CD14-positive monocyte (primary cell): ENCODE measurements at regions of chr6 and their contacts with region 1.

Region 1: GRCh38 chr6:159654483-159655098 is 38.5 kb downstream of the SOD2 start:
- DNase-seq: peak in 2 of 3 donors; percentile 52 to 65
- H3K4me3 ChIP-seq: no peak overlapping the region
- H3K4me3 Mint-ChIP-seq: no peak overlapping the region
- H3K27ac ChIP-seq: no peak overlapping the region
- H3K27ac Mint-ChIP-seq: no peak overlapping the region
- H3K4me1 ChIP-seq: no peaks in the 10 kb centered on the region
- H3K4me1 Mint-ChIP-seq: no peaks in the 10 kb centered on the region
- H3K27me3 ChIP-seq: no peaks in the 10 kb centered on the region
- H3K27me3 Mint-ChIP-seq: peaks cover 0 to 3% (median 2%) of the 10 kb centered on the region in 3 donors
- CTCF ChIP-seq: peak; percentile 83

Region 2: DNA sequence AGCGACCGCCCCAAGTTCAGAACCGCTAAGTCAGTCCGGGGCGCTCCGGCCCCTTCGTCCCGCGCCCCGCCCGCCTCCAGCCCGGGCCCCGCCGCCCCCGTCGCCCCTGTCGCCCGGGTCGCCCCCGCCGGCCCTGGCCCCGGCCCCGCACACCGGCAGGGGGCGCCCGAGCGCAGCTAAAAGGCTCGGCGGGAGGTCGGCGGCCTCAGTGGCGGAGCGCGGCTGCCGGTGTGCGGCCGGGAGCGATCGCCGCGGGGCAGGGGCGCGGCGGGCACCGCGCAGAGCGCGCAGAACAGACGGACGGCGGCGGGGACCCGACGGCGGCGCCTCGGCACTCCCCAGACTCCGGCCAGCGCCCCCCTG is 485.4 kb before region 1 on chr6 and contains the start of gene FNDC1:
- intact Hi-C with region 1: loop called in 1 of 2 experiments (anchors 2 kb)
- DNase-seq: peak in 2 of 3 donors; percentile 16 to 33
- H3K4me3 ChIP-seq: peak within 1 kb of the TSS in 2 of 3 experiments; percentile 15 to 65
- H3K4me3 Mint-ChIP-seq: peak within 1 kb of the TSS; percentile 73 to 89
- H3K27ac ChIP-seq: no peak within 1 kb of the TSS
- H3K27ac Mint-ChIP-seq: peak within 1 kb of the TSS in 1 of 7 donors; percentile 42
- H3K4me1 ChIP-seq: peaks cover 12 to 16% of the 10 kb centered on the region in 2 donors
- H3K4me1 Mint-ChIP-seq: peaks cover 20% of the 10 kb centered on the region
- H3K27me3 ChIP-seq: peaks cover 61 to 81% of the 10 kb centered on the region in 2 donors
- H3K27me3 Mint-ChIP-seq: peaks cover 74 to 87% (median 75%) of the 10 kb centered on the region in 3 donors
- CTCF ChIP-seq: no peak
- polyA plus RNA-seq, gene FNDC1: not detected

Region 3: GRCh38 chr6:159174263-159174969 is 480.2 kb before region 1 on chr6:
- intact Hi-C with region 1: loop called in 1 of 2 experiments (anchors 2 kb)
- DNase-seq: peak; percentile 34 to 61 (median 47)
- H3K4me3 ChIP-seq: no peak overlapping the region
- H3K4me3 Mint-ChIP-seq: peak overlapping the region in 1 of 2 donors; percentile 66
- H3K27ac ChIP-seq: no peak overlapping the region
- H3K27ac Mint-ChIP-seq: no peak overlapping the region
- H3K4me1 ChIP-seq: peaks cover 5 to 8% of the 10 kb centered on the region in 2 donors
- H3K4me1 Mint-ChIP-seq: peaks cover 12% of the 10 kb centered on the region
- H3K27me3 ChIP-seq: peaks cover 46 to 59% of the 10 kb centered on the region in 2 donors
- H3K27me3 Mint-ChIP-seq: peaks cover 53 to 67% (median 55%) of the 10 kb centered on the region in 3 donors
- CTCF ChIP-seq: peak; percentile 96